ENCODE measurements at regions of chr11 and their contacts with region 1.

Region 1: DNA sequence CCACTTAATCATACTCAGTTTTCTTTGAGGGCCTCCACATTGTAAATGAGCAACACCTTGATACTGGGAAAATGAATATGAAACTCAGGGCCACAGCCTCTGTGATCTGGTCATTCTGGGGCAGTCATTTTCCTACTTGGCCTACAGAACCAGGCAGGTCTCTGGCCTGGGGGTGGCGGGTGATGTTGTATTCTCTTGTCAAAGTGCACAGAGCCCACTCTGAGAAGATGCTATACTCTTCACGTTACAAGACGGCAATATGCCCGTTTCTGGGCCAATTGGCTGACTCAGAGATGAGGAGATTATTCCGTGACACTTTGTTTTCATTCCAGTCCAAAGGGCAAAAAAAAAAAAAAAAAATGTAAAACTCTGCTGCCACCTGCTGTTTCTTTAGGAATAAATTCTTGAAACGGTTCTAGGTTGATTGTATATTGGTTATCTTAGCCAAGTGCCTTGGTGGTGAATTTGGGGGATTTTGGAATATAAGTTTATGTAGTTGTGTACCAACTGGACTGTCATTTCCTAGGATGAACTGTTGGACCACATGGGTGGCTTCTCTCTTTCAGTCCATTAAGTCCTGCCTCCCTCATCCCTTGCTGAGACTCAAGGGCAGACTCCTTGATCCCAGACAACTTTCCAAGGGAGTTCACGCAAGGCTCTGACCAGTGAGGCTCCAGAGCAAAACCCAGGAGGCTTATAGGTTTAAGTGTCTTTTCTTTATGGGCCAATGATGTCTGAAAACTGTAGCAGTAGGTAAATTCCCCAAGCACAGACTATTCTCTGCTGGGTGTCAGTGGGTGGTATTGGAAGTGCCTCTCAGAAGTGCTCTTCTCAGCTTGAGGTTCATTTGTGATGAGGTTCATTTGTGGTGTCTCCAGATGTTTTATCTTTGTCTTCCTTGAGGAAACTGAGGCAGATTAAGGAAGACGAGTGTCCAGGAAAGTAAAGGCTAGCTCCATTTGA is 18.2 kb downstream of the ADM start:
- DNase-seq: no peak
- CTCF ChIP-seq: peak; percentile 34

Region 2: GRCh38 chr11:10208131-10208575 is 115.0 kb before region 1 on chr11:
- in situ Hi-C with region 1: loop called (anchors 10 kb)
- DNase-seq: peak; percentile 52
- CTCF ChIP-seq: peak; percentile 60

Measured in GM13977 (cell line).